Activated B cell treated with CpG ODN at 0.5 μM for 24 hours (primary cell): ENCODE measurements at regions of chr19 and their contacts with region 1.

Region 1: DNA sequence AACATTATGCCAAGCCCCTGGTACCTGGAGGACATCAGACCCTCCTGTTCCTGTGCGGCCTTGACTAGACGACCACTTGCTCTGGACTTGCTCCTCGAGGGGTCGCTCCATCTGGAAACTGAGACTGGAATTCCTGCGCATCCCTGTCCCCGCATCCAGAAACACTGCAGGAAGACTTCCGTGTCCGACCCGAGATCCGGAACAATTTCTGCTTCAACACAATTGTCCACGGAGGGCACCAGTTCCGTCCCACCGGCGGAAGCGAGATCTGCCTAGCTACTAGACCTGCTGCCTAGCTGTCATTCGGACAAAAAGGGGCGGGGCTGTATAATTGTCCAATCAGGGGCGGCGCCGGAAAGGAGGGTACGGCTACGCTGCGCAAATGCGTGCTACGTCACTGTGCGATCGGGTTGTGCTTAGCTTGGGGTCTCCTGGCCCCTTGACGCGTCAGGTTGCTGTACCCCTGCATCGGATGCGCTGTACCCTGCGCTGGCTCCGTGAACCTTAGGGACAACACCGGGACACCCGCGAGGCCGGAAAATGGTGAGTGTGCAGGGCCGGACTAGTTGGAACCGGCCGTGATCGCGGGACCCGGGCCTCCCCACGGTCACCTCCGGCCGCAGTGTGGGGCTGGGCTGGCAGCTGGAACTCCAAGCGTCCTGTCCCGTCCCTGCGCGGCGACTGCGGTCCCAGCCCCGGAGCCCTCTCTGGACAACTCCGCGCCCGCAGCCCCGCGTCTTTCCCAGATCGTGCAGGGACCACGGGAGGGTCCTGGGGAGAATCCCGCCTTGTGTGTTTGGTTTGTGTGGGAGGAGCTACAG is at the starts of genes ZNF490 and ZNF791:
- DNase-seq: peak; percentile 89
- ATAC-seq: peak; percentile 80
- H3K4me3 Mint-ChIP-seq: peak within 1 kb of the TSS; percentile 100
- H3K27ac Mint-ChIP-seq: peak within 1 kb of the TSS; percentile 100
- H3K4me1 Mint-ChIP-seq: peaks cover 66% of the 10 kb centered on the region
- H3K27me3 Mint-ChIP-seq: no peaks in the 10 kb centered on the region
- CTCF ChIP-seq: no peak
- total RNA-seq, gene ZNF490: 15.6 TPM in 2 replicates
- total RNA-seq, gene ZNF791: 37.5 and 46.1 TPM in 2 replicates

Region 2: GRCh38 chr19:12400633-12401502 is 209.9 kb before region 1 on chr19 and contains the start of gene ZNF799:
- CTCF ChIA-PET with region 1: no interaction called
- POLR2A ChIA-PET with region 1: no interaction called
- intact Hi-C with region 1: loop called (anchors 2 kb)
- DNase-seq: peak; percentile 83
- ATAC-seq: peak; percentile 89
- H3K4me3 Mint-ChIP-seq: peak within 1 kb of the TSS; percentile 92
- H3K27ac Mint-ChIP-seq: peak within 1 kb of the TSS; percentile 77
- H3K4me1 Mint-ChIP-seq: peaks cover 22% of the 10 kb centered on the region
- H3K27me3 Mint-ChIP-seq: no peaks in the 10 kb centered on the region
- CTCF ChIP-seq: no peak
- total RNA-seq, gene ZNF799: 6.8 and 6.9 TPM in 2 replicates

Region 3: GRCh38 chr19:12551060-12551832 is 59.5 kb before region 1 on chr19 and contains the start of gene ZNF564:
- CTCF ChIA-PET with region 1: no interaction called
- POLR2A ChIA-PET with region 1: interaction called, 5 read pairs
- intact Hi-C with region 1: loop called (anchors 1 kb)
- DNase-seq: peak; percentile 81
- ATAC-seq: peak; percentile 98
- H3K4me3 Mint-ChIP-seq: peak within 1 kb of the TSS; percentile 98
- H3K27ac Mint-ChIP-seq: peak within 1 kb of the TSS; percentile 94
- H3K4me1 Mint-ChIP-seq: peaks cover 48% of the 10 kb centered on the region
- H3K27me3 Mint-ChIP-seq: no peaks in the 10 kb centered on the region
- CTCF ChIP-seq: no peak
- total RNA-seq, gene ZNF564: 23.0 and 26.6 TPM in 2 replicates

Region 4: GRCh38 chr19:12574036-12574435 is 36.7 kb before region 1 on chr19:
- CTCF ChIA-PET with region 1: interaction called, 3 read pairs
- POLR2A ChIA-PET with region 1: interaction called, 33 read pairs
- intact Hi-C with region 1: loop called (anchors 1 kb)
- DNase-seq: peak; percentile 27
- ATAC-seq: peak; percentile 95
- H3K4me3 Mint-ChIP-seq: peak overlapping the region; percentile 44
- H3K27ac Mint-ChIP-seq: peak overlapping the region; percentile 86
- H3K4me1 Mint-ChIP-seq: peaks cover 42% of the 10 kb centered on the region
- H3K27me3 Mint-ChIP-seq: no peaks in the 10 kb centered on the region
- CTCF ChIP-seq: no peak

Region 5: GRCh38 chr19:12639901-12640613 is 29.3 kb after region 1 on chr19:
- CTCF ChIA-PET with region 1: interaction called, 10 read pairs
- POLR2A ChIA-PET with region 1: interaction called, 14 read pairs
- intact Hi-C with region 1: loop called (anchors 2 kb)
- DNase-seq: peak; percentile 75
- ATAC-seq: peak; percentile 95
- H3K4me3 Mint-ChIP-seq: peak overlapping the region; percentile 79
- H3K27ac Mint-ChIP-seq: peak overlapping the region; percentile 46
- H3K4me1 Mint-ChIP-seq: peaks cover 23% of the 10 kb centered on the region
- H3K27me3 Mint-ChIP-seq: no peaks in the 10 kb centered on the region
- CTCF ChIP-seq: no peak

Region 6: DNA sequence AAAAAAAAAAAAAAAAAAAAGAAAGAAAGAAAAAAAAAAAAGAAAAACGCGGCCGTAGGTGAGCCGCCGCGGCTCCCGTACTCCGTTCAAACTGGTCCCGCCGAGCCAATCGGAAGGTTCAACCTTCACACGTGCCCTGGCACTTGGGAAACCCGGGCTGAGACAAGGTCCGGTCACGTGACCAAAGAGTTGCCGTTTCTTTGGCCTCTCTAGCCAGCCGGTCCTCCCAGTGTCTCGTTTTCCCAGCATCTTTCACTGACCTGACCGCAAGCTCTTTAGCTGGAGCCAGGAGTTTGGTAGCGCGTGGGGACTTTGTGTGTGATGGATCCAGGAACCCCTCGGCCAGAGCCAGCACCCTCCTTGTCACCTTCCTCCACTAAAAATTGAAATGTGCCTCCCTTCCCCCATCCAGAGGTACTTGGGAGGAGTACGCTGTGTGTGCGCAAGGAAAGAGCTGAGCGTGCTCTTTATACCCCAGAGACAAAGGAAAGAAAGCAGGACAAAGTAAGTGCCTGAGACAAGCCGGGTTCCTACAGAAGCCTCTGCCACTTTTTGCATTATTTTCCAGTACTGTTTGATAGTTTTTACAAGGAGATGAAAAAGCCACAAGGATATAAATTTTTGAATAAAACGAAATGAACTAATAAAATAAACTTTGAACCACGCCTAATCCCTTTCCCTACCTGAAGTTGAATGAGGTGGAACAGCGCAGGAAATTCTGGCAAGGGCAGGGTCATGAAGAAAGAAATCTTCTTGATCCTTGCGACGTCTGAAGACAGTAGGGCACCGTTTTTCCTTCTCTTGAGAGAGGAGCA is 112.0 kb after region 1 on chr19:
- CTCF ChIA-PET with region 1: no interaction called
- POLR2A ChIA-PET with region 1: interaction called, 4 read pairs
- intact Hi-C with region 1: loop called (anchors 5 kb)
- DNase-seq: peak; percentile 75
- ATAC-seq: peak; percentile 84
- H3K4me3 Mint-ChIP-seq: peak overlapping the region; percentile 92
- H3K27ac Mint-ChIP-seq: peak overlapping the region; percentile 90
- H3K4me1 Mint-ChIP-seq: peaks cover 43% of the 10 kb centered on the region
- H3K27me3 Mint-ChIP-seq: no peaks in the 10 kb centered on the region
- CTCF ChIP-seq: no peak